ENCODE measurements at regions of chr17 and their contacts with region 1.

Region 1: GRCh38 chr17:43393944-43394482 is 4.8 kb upstream of the ARL4D start:
- DNase-seq: peak; percentile 85
- ATAC-seq: peak; percentile 58

Region 2: DNA sequence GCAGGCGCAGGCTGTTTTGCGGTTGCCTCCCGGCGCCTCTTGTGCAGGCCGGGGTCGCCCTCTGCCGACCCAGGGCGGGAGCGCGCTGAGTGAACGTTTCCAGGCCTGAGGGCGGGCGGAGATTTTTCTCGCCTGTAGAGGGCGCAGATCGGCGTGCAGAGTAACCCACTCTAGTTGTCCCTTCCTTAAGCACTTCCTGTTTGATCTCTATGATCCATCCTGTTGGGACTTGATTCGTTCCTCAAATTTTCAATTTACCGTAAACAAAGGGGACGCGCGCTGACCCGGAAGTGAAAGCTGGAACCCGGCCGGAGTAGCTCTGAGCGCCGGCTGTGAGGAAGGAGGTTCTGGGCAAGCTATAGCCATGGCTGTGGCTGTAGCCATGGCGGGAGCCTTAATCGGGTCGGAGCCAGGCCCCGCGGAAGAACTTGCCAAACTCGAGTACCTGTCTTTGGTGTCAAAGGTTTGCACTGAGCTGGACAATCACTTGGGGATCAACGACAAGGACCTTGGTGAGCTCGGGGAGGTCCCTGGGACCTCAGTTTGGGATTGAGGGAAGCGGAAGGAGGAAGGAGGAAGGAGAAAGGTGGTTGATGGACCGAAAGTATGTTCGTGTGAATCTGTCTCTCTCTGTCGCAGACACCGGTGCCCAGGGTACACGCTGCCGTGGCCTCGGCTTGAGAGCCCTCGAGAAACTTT is 89.8 kb after region 1 on chr17 and contains the start of gene DHX8:
- intact Hi-C with region 1: loop called (anchors 1 kb)
- DNase-seq: peak; percentile 98
- ATAC-seq: peak; percentile 99
- total RNA-seq, gene DHX8: 22.3 TPM